Activated CD8-positive, alpha-beta T cell treated with anti-CD3 and anti-CD28 coated beads for 36 hours (primary cell): ENCODE measurements at regions of chr5 and their contacts with region 1.

Region 1: DNA sequence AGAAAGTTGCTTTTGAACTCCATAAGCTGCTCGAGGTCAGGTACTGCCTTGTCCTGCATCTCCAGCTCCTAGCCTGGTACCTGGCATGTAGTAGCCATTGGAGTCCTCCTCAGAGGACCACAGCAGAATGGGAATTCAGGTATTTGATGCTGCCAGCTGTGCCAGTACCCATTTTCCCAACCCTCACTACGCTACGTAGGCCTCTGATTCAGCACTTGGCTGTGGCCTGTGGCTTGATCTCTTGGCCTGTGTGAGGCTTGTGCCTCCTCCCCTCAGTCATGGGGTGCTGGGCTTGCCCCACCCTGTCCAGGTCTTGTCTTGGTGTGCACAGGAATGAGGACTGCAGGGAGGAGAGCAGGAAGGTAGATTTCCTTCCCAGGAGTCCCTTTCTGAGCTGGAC is 11.8 kb downstream of the OTULIN start:
- DNase-seq: peak; percentile 57
- ATAC-seq: peak; percentile 76
- H3K4me3 Mint-ChIP-seq: peak overlapping the region; percentile 50
- H3K27ac Mint-ChIP-seq: peak overlapping the region; percentile 90
- H3K4me1 Mint-ChIP-seq: peaks cover 71% of the 10 kb centered on the region
- H3K27me3 Mint-ChIP-seq: no peaks in the 10 kb centered on the region
- CTCF ChIP-seq: no peak

Region 2: GRCh38 chr5:14700478-14701436 is 24.4 kb after region 1 on chr5:
- CTCF ChIA-PET with region 1: no interaction called
- POLR2A ChIA-PET with region 1: interaction called, 11 read pairs
- intact Hi-C with region 1: no loop called
- DNase-seq: no peak
- ATAC-seq: no peak
- H3K4me3 Mint-ChIP-seq: no peak overlapping the region
- H3K27ac Mint-ChIP-seq: peak overlapping the region; percentile 44
- H3K4me1 Mint-ChIP-seq: peaks cover 56% of the 10 kb centered on the region
- H3K27me3 Mint-ChIP-seq: no peaks in the 10 kb centered on the region
- CTCF ChIP-seq: no peak

Region 3: GRCh38 chr5:15026011-15026893 is 349.9 kb after region 1 on chr5:
- CTCF ChIA-PET with region 1: no interaction called
- POLR2A ChIA-PET with region 1: no interaction called
- intact Hi-C with region 1: no loop called
- DNase-seq: no peak
- ATAC-seq: no peak
- H3K4me3 Mint-ChIP-seq: no peak overlapping the region
- H3K27ac Mint-ChIP-seq: no peak overlapping the region
- H3K4me1 Mint-ChIP-seq: no peaks in the 10 kb centered on the region
- H3K27me3 Mint-ChIP-seq: peaks cover 23% of the 10 kb centered on the region
- CTCF ChIP-seq: no peak